ENCODE measurements at regions of chrX and their contacts with region 1.

Region 1: DNA sequence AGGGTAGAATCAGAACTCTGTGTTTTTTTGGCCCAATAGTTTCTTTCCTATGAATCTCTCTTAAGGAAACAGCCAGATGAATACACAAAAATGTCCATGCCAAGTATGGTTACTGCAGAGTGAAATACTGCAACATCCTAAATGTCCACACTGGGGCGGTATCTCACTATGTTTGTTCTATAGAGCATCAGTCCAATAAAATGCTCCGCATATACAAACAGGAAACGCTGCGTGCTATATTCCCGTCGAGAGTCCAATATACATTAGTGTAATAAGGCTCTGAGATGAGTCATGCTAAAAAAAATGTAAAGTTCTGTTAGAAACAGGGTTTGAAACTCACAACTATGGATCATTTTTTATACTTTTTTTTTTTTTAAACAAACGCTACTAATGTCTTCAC is 72.9 kb upstream of the ENOX2 start:
- DNase-seq: no peak
- H3K4me3 ChIP-seq: no peak overlapping the region
- H3K27ac ChIP-seq: no peak overlapping the region
- H3K4me1 ChIP-seq: no peaks in the 10 kb centered on the region
- H3K27me3 ChIP-seq: no peaks in the 10 kb centered on the region
- CTCF ChIP-seq: peak; percentile 30 to 41 (median 35)
- EP300 ChIP-seq: no peak
- POLR2A ChIP-seq: no peak

Region 2: DNA sequence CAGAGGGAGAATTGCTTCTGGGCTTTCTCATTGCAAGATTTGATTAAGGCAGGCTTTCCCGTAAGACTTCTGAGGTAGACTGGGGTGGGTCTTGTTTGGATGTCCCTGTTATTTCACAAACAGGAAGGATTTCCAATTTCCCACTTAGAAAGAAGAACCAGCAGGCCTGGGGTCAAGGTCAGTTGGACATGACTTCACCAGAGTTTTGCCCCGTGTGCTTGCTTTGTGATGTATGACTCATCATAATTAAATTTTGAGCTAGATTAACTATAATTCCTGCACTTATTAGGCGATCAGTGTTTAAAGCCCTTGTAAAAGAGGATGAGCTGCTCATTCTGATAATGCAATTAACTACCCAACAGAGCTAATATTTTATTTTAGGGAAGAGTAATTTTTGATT is 49.4 kb after region 1 on chrX:
- intact Hi-C with region 1: no loop called
- DNase-seq: no peak
- H3K4me3 ChIP-seq: no peak overlapping the region
- H3K27ac ChIP-seq: no peak overlapping the region
- H3K4me1 ChIP-seq: no peaks in the 10 kb centered on the region
- H3K27me3 ChIP-seq: no peaks in the 10 kb centered on the region
- CTCF ChIP-seq: no peak
- EP300 ChIP-seq: no peak
- POLR2A ChIP-seq: no peak

Region 3: DNA sequence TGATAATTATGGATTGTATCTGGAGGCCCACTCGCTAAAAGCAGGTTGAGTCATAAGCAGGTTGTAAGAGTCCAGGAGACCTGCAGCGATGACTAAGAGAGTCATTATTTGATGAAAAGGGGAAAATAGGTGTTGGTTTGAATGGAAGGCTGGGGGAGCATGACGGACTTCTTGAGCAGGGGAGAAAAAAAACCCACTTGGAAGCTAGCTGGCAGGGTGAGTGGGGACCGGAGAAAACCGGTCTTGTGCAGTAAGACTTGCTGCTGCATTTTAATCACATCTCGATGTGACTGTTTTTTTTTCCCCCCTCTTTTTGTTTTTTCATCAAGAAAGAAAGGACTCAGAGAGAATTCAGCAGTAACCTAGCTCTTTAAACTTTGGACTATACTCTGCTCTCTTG is 223.1 kb after region 1 on chrX:
- intact Hi-C with region 1: no loop called
- DNase-seq: no peak
- H3K4me3 ChIP-seq: no peak overlapping the region
- H3K27ac ChIP-seq: no peak overlapping the region
- H3K4me1 ChIP-seq: no peaks in the 10 kb centered on the region
- H3K27me3 ChIP-seq: no peaks in the 10 kb centered on the region
- CTCF ChIP-seq: no peak
- EP300 ChIP-seq: no peak
- POLR2A ChIP-seq: no peak

Region 4: GRCh38 chrX:131633285-131633917 is 657.5 kb after region 1 on chrX:
- intact Hi-C with region 1: loop called (anchors 10 kb)
- DNase-seq: no peak
- H3K4me3 ChIP-seq: no peak overlapping the region
- H3K27ac ChIP-seq: no peak overlapping the region
- H3K4me1 ChIP-seq: no peaks in the 10 kb centered on the region
- H3K27me3 ChIP-seq: peaks cover 0 to 14% (median 0%) of the 10 kb centered on the region in 4 donors
- CTCF ChIP-seq: peak; percentile 53 to 70 (median 65)
- EP300 ChIP-seq: no peak
- POLR2A ChIP-seq: no peak